MCF 10A (cell line): ENCODE measurements at regions of chr20 and their contacts with region 1.

Region 1: GRCh38 chr20:62861726-62862336 is at the start of gene TCFL5:
- DNase-seq: peak; percentile 75
- H3K4me3 Mint-ChIP-seq: peak within 1 kb of the TSS; percentile 64
- H3K27ac Mint-ChIP-seq: peak within 1 kb of the TSS; percentile 5
- H3K4me1 Mint-ChIP-seq: peaks cover 17% of the 10 kb centered on the region
- H3K27me3 Mint-ChIP-seq: peaks cover 10% of the 10 kb centered on the region
- CTCF ChIP-seq: no peak
- total RNA-seq, gene TCFL5: 10.8 and 12.8 TPM in 2 replicates

Region 2: GRCh38 chr20:62740286-62741141 is 121.3 kb before region 1 on chr20:
- CTCF ChIA-PET with region 1: no interaction called
- POLR2A ChIA-PET with region 1: no interaction called
- intact Hi-C with region 1: no loop called
- DNase-seq: peak; percentile 96
- H3K4me3 Mint-ChIP-seq: peak overlapping the region; percentile 71
- H3K27ac Mint-ChIP-seq: peak overlapping the region; percentile 67
- H3K4me1 Mint-ChIP-seq: peaks cover 20% of the 10 kb centered on the region
- H3K27me3 Mint-ChIP-seq: no peaks in the 10 kb centered on the region
- CTCF ChIP-seq: no peak

Region 3: GRCh38 chr20:62822788-62823651 is 38.8 kb before region 1 on chr20:
- CTCF ChIA-PET with region 1: no interaction called
- POLR2A ChIA-PET with region 1: interaction called, 4 read pairs
- intact Hi-C with region 1: loop called (anchors 5 kb)
- DNase-seq: peak; percentile 66
- H3K4me3 Mint-ChIP-seq: no peak overlapping the region
- H3K27ac Mint-ChIP-seq: no peak overlapping the region
- H3K4me1 Mint-ChIP-seq: peaks cover 7% of the 10 kb centered on the region
- H3K27me3 Mint-ChIP-seq: no peaks in the 10 kb centered on the region
- CTCF ChIP-seq: peak; percentile 49

Region 4: DNA sequence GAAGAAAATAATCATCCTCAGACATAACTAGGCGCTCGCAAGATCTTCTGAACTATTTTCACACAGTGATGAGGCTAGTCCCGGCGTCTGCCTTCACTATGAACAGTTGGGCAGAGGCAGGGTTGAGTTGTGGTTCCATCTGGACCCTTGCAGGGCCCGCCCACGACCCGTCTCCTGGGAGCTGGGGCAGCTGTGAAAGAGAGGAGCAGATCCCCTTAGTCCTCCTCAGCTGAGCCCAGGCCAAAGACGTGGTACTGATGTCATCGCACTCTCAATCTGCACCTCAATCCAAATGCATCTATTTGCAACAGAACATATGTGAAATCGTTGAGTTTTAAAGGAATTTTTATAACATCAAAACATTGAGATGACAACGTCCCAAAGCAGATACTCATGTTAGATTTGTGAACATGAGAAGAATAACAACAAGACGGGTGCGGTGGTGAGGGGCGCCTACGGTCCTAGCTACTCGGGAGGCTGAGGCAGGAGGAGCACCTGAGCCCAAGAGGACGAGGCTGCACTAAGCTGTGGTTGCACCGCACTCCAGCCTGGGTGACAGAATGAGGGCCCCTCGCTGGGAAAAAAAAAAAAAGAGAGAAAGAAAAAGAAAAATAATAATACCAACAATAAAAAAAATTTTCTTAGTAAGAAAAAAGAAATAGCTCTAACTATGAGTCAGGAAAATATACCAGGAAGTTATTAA is 15.5 kb before region 1 on chr20:
- CTCF ChIA-PET with region 1: interaction called, 3 read pairs
- POLR2A ChIA-PET with region 1: interaction called, 12 read pairs
- intact Hi-C with region 1: no loop called
- DNase-seq: no peak
- H3K4me3 Mint-ChIP-seq: no peak overlapping the region
- H3K27ac Mint-ChIP-seq: no peak overlapping the region
- H3K4me1 Mint-ChIP-seq: peaks cover 8% of the 10 kb centered on the region
- H3K27me3 Mint-ChIP-seq: no peaks in the 10 kb centered on the region
- CTCF ChIP-seq: no peak